ENCODE measurements at regions of chr6 and their contacts with region 1.

Region 1: GRCh38 chr6:148250975-148251685 is 91.5 kb upstream of the SASH1 start:
- DNase-seq: peak; percentile 56
- ATAC-seq: peak; percentile 67
- H3K4me3 ChIP-seq: no peak overlapping the region
- H3K27ac ChIP-seq: no peak overlapping the region
- H3K4me1 ChIP-seq: no peaks in the 10 kb centered on the region
- H3K27me3 ChIP-seq: no peaks in the 10 kb centered on the region
- CTCF ChIP-seq: peak; percentile 67

Region 2: GRCh38 chr6:148177589-148178233 is 73.4 kb before region 1 on chr6:
- CTCF ChIA-PET with region 1: interaction called, 6 read pairs
- POLR2A ChIA-PET with region 1: interaction called, 5 read pairs
- intact Hi-C with region 1: loop called (anchors 1 kb)
- DNase-seq: peak; percentile 74
- ATAC-seq: peak; percentile 51; the same call in 1 of the 2 replicates
- H3K4me3 ChIP-seq: no peak overlapping the region
- H3K27ac ChIP-seq: no peak overlapping the region
- H3K4me1 ChIP-seq: no peaks in the 10 kb centered on the region
- H3K27me3 ChIP-seq: no peaks in the 10 kb centered on the region
- CTCF ChIP-seq: peak; percentile 74

Region 3: GRCh38 chr6:148464319-148465010 is 213.3 kb after region 1 on chr6:
- CTCF ChIA-PET with region 1: no interaction called
- POLR2A ChIA-PET with region 1: no interaction called
- intact Hi-C with region 1: loop called (anchors 1 kb)
- DNase-seq: peak; percentile 79
- ATAC-seq: peak; percentile 70
- H3K4me3 ChIP-seq: no peak overlapping the region
- H3K27ac ChIP-seq: no peak overlapping the region
- H3K4me1 ChIP-seq: peaks cover 3% of the 10 kb centered on the region; the same call in 1 of the 2 replicates
- H3K27me3 ChIP-seq: no peaks in the 10 kb centered on the region
- CTCF ChIP-seq: peak; percentile 91

Region 4: DNA sequence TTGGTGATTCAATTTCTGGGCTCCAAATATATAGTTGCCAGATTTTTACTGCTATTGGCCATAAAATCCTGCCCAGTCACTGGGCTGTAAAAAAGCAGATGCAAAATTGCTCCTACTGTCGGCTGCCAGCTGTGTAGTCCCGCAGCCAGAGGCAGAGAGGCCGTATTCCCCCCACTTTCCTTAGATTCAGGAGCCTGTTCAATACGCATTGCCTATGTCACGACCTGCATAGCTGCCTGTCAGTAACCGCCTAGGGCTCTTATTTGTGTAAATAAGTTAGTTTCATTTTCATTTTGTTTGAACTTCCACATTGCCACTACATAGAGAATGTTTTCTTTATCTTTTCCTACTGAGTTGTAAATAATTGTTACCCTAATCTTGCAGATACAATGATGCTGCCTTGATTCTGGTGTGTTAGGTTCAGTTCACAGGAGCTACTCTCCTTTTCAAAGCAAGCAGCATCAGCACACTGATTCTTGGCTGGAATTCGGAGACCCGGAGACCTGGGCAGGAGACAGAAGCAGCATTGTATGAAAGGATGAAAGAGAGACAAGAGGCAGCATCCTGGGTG is 449.7 kb after region 1 on chr6:
- CTCF ChIA-PET with region 1: no interaction called
- POLR2A ChIA-PET with region 1: no interaction called
- intact Hi-C with region 1: no loop called
- DNase-seq: peak; percentile 39
- ATAC-seq: peak; percentile 62
- H3K4me3 ChIP-seq: peak overlapping the region; percentile 81
- H3K27ac ChIP-seq: no peak overlapping the region
- H3K4me1 ChIP-seq: peaks cover 15% of the 10 kb centered on the region
- H3K27me3 ChIP-seq: no peaks in the 10 kb centered on the region
- CTCF ChIP-seq: no peak

Region 5: DNA sequence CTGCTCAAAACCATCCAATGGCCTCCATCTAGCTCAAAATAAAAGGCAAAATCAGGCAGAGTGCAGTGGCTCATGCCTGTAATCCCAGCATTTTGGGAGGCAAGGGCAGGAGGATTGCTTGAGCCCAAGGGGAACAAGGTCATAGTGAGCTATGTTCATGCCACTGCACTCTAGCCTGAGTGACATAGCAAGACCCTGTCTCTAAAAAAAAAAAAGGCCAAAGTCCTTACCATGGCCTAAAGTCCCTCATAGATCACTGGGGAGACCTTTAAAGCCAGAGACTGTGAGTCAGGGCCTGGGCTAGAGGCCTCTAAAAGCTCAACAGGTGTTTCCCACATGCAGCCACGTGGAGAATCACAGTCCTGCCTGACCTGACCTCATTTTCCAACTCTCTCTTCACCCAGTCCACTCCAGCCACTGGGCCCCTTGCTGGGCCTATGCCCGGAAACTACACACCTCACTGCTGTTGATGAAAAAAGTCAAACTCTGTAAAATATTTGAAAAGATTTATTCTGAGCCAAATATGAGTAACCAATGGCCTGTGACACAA is 1038.1 kb after region 1 on chr6:
- CTCF ChIA-PET with region 1: no interaction called
- POLR2A ChIA-PET with region 1: interaction called, 11 read pairs
- intact Hi-C with region 1: no loop called
- DNase-seq: no peak
- ATAC-seq: no peak
- H3K4me3 ChIP-seq: no peak overlapping the region
- H3K27ac ChIP-seq: no peak overlapping the region
- H3K4me1 ChIP-seq: peaks cover 4% of the 10 kb centered on the region
- H3K27me3 ChIP-seq: no peaks in the 10 kb centered on the region
- CTCF ChIP-seq: no peak